SK-N-SH (cell line): ENCODE measurements at regions of chr7 and their contacts with region 1.

Region 1: DNA sequence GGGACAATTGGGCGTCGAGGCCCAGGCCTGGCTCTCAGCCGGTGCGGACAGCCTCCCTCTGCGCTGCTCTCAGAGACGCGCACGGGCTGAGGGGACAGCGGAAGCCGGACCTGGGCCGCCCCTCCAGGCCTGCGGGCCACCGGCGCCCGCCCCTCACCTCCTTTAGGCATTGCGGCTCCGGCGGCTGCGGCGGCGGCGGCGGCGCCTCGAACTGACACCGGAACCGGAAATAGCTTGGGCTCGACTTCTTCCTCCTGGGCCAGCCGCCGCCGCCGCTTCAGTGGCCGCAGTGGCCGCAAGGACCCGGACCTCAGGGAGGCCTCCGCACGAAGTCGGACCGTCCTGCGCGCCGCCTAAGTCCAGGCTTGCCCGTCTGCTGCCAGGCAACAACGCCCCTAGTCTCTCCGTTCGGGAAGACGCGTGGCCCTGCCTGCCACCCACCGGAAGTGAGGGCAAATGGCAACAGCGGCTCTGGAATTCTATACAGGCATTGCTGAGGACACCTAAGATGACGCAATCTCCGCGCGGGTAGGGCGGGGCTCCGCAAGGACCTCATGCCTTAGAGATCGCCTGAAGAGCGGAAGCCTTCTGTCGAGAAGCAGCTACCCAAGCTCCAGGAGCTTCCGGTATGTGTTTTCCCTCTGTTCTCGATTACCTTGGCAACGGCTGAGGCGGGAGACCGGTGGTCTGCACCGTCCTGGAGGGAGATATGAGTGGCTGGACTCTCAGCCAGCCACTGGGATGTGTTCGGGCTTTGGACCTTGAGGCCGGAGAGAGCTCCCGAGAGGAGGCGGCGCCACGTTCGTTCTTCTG is at the starts of genes BUD31 and PDAP1:
- DNase-seq: peak; percentile 98
- H3K4me3 ChIP-seq: peak within 1 kb of the TSS; percentile 85 to 97
- H3K27ac ChIP-seq: peak within 1 kb of the TSS; percentile 98 to 99
- H3K4me1 ChIP-seq: peaks cover 15 to 28% of the 10 kb centered on the region in 2 experiments
- H3K27me3 ChIP-seq: no peaks in the 10 kb centered on the region
- CTCF ChIP-seq: no peak
- EP300 ChIP-seq: peak; percentile 16 to 74; a peak in 2 of 4 replicates
- RAD21 ChIP-seq: no peak
- polyA plus RNA-seq, gene BUD31: 124 and 162 TPM in 2 replicates
- polyA plus RNA-seq, gene PDAP1: 296 and 389 TPM in 2 replicates

Region 2: DNA sequence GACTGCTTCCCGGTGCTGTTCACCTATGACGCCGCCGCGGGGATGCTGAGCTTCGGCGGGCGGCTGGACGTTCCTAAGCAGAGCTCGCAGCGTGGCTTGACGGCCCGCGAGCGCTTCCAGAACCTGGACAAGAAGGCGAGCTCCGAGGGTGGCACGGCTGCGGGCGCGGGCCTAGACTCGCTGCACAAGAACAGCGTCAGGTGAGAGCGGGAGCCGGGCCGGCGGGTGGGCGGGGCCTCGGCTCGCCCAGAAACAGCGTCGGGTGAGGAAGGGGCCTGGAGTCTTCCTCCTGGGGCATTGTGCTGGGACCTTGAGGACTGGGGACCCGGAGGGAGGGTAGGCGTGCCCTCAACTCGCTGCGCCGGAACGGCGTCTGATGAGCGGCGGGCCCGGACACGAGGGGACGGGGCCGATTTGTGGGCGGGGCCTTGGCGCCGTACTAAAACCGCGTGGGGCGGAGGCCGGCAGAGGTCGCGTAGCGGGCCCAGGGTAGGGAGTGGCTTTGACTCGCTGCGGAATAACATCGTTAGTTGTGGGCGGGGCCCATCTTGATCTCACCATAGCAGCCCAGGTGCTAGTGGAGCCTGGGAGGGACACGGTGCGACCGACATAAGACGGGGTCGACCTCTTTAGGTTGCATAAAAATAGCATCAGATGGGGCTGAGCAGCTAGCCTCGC is 15.8 kb before region 1 on chr7:
- CTCF ChIA-PET with region 1: interaction called, 11 read pairs
- POLR2A ChIA-PET with region 1: interaction called, 102 read pairs
- DNase-seq: peak; percentile 95
- H3K4me3 ChIP-seq: peak overlapping the region in 1 of 2 experiments; percentile 41; a peak in 3 of 4 replicates
- H3K27ac ChIP-seq: peak overlapping the region in 1 of 2 experiments; percentile 67; a peak in 2 of 4 replicates
- H3K4me1 ChIP-seq: peaks cover 0 to 17% of the 10 kb centered on the region in 2 experiments; a peak in 1 of 4 replicates
- H3K27me3 ChIP-seq: no peaks in the 10 kb centered on the region
- CTCF ChIP-seq: no peak
- EP300 ChIP-seq: no peak
- RAD21 ChIP-seq: no peak

Region 3: DNA sequence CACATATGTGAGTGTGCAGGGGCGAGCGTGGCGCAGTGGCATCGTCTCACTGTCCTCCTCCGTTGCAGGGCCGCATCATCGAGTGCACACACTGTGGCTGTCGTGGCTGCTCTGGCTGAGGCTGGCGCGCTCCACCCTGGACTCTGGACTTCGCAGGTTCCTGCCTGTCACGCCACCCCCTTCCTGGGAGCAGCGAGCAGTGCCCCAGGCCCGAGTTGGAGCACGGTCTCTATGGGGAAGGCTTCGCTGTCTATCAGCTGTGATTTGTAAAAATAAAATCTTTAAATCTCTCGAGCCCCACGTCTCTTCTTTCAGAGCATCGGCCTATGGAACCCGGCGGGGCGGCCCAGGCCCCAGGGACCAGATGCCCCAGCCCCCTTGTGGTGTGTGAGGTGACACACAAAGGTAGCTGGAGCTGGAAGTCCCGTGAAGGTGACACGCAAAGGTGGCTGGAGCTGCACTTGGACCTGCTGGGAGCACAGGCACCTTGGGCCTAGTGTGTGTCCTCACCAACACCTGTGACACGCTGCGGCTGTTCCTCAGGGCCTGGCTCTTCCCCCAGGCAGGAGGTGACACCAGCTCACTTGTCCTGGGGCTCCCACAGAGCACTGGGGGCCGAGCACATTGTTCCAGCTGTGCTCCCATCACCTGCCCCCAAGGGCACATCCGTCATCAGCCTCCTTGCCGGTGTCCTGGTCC is 10.9 kb after region 1 on chr7:
- CTCF ChIA-PET with region 1: interaction called, 5 read pairs
- POLR2A ChIA-PET with region 1: interaction called, 10 read pairs
- DNase-seq: no peak
- H3K4me3 ChIP-seq: no peak overlapping the region
- H3K27ac ChIP-seq: no peak overlapping the region
- H3K4me1 ChIP-seq: no peaks in the 10 kb centered on the region
- H3K27me3 ChIP-seq: no peaks in the 10 kb centered on the region
- CTCF ChIP-seq: no peak
- EP300 ChIP-seq: no peak
- RAD21 ChIP-seq: no peak